B cell (primary cell): ENCODE measurements at regions of chr6 and their contacts with region 1.

Region 1: DNA sequence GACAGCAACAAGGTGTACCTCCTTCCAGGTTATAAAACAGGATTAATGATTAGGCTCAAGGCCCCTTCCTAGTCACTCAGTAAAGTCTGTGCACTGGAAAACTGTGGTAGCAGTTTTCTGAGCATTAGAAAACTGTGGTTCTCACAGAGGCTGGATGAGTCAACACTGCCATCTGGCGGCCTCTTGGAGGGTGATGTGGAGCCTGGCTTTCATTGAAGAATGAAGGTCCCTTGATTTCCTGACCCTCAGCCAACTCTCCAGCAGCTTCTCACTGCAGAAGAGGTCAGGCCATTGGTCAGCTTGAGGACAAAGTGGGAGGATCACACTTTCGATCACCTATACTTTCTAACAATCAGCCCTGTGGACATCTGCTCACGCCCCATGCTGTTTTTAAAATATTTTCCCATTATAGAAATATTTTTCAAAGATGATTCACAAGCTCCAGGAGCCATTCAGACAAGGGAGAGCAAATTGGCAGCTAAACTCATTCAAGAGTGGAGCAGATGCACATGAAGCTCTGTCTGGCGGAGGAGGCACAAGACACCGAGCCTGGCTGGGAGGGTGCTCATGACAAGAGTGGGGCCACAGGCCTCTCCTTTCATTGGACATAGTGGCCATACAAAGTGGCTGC is 23.2 kb downstream of the PSMB1 start:
- DNase-seq: peak; percentile 67
- ATAC-seq: peak; percentile 49
- H3K4me3 ChIP-seq: no peak overlapping the region
- H3K4me3 Mint-ChIP-seq: no peak overlapping the region
- H3K27ac ChIP-seq: no peak overlapping the region
- H3K27ac Mint-ChIP-seq: no peak overlapping the region
- H3K4me1 ChIP-seq: no peaks in the 10 kb centered on the region
- H3K4me1 Mint-ChIP-seq: no peaks in the 10 kb centered on the region
- H3K27me3 ChIP-seq: no peaks in the 10 kb centered on the region
- H3K27me3 Mint-ChIP-seq: no peaks in the 10 kb centered on the region
- CTCF ChIP-seq: peak; percentile 83

Region 2: DNA sequence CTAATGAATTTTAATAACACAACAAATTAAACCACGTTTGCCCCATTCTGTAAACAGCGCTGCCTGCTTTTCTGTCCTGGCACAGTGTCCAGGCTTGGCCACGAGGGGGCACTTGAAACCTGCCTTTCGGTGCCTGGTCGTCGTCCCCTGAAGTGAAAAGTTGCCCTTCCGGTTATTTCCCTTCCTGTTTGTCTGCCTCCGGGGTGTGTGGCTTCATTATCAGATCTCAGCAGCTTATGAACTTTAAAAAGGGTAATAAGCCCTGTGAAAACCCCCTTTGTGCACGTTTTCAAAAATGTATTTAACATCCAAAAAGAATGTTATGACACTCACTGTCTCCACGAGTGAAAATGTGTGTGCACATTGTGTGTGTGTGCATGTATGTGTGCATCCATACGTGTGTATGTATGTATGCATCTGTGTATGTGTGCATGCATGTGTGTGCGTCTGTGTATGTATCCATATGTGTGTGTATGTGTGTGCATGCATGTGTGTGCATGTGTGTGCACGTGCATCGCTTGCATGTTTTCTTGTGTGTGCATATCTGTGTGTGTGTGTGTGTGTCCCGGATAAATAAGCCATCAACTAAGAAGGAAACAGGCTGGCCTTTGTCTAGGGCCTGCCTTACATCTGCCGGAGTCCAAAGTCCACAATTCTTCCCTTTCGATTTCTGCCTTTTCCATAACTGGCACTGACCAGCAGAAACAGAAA is 1634.7 kb before region 1 on chr6:
- CTCF ChIA-PET with region 1: interaction called, 15 read pairs
- POLR2A ChIA-PET with region 1: no interaction called
- intact Hi-C with region 1: no loop called
- DNase-seq: peak; percentile 69
- ATAC-seq: peak; percentile 90
- H3K4me3 ChIP-seq: peak overlapping the region in 3 of 5 experiments; percentile 27 to 56 (median 34)
- H3K4me3 Mint-ChIP-seq: peak overlapping the region; percentile 35
- H3K27ac ChIP-seq: no peak overlapping the region
- H3K27ac Mint-ChIP-seq: no peak overlapping the region
- H3K4me1 ChIP-seq: peaks cover 0 to 4% of the 10 kb centered on the region in 2 donors
- H3K4me1 Mint-ChIP-seq: peaks cover 6% of the 10 kb centered on the region
- H3K27me3 ChIP-seq: peaks cover 0 to 2% (median 0%) of the 10 kb centered on the region in 4 experiments
- H3K27me3 Mint-ChIP-seq: peaks cover 8% of the 10 kb centered on the region
- CTCF ChIP-seq: peak; percentile 91

Region 3: GRCh38 chr6:168956884-168957730 is 1572.8 kb before region 1 on chr6:
- CTCF ChIA-PET with region 1: interaction called, 11 read pairs
- POLR2A ChIA-PET with region 1: no interaction called
- intact Hi-C with region 1: loop called (anchors 1 kb)
- DNase-seq: peak; percentile 56
- ATAC-seq: no peak
- H3K4me3 ChIP-seq: no peak overlapping the region
- H3K4me3 Mint-ChIP-seq: no peak overlapping the region
- H3K27ac ChIP-seq: no peak overlapping the region
- H3K27ac Mint-ChIP-seq: no peak overlapping the region
- H3K4me1 ChIP-seq: no peaks in the 10 kb centered on the region
- H3K4me1 Mint-ChIP-seq: no peaks in the 10 kb centered on the region
- H3K27me3 ChIP-seq: peaks cover 0 to 4% (median 0%) of the 10 kb centered on the region in 4 experiments
- H3K27me3 Mint-ChIP-seq: peaks cover 26% of the 10 kb centered on the region
- CTCF ChIP-seq: peak; percentile 71

Region 4: DNA sequence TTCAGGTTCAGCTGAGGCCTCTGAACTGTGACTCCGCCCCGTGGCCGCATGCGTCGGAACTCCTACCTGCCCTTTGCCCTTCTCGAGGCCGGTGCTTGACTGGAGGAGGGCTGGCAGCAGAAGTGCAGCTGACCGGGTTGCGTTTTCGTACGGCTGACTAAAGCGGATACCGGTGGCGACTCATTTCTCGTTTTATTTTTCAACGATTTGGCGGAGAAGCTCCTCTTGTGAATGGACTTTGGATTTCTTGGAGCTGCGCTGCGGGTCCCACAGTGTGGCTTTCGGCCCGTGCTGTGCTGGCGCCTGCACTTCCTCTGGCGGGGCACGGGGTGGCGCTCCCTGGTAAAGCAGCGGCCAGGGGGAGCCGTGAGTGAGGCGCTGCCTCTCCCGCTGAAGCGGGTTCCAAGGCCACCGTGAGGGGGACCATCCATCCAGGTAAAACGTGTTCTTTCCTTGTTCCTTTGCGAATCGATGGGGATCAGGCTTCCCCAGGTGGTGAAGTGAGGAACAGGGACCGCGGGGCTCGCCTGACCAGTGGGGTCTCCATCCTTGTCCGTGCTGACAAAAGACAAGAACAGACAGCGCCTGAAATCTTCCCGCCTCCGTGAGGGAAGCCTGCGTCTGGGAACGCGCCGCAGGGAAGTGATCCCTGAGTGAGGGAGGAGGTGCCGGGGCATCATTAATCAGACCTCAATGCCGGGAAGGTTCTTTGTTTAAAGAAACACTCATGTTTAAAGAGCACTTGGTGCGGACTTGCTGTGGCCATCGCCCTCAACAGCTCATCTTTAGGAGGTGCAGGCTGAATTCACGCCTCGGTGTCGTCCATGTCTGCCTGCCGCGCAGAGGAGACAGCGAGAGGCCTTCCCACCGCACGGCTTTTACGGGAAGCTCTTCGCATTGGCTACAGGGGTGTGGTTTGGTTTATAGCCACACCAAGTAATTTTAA is 739.7 kb before region 1 on chr6:
- CTCF ChIA-PET with region 1: interaction called, 44 read pairs
- POLR2A ChIA-PET with region 1: no interaction called
- intact Hi-C with region 1: loop called (anchors 1 kb)
- DNase-seq: peak; percentile 81
- ATAC-seq: peak; percentile 93
- H3K4me3 ChIP-seq: peak overlapping the region; percentile 32 to 73 (median 51)
- H3K4me3 Mint-ChIP-seq: peak overlapping the region; percentile 92
- H3K27ac ChIP-seq: no peak overlapping the region
- H3K27ac Mint-ChIP-seq: no peak overlapping the region
- H3K4me1 ChIP-seq: peaks cover 9 to 16% of the 10 kb centered on the region in 2 donors
- H3K4me1 Mint-ChIP-seq: peaks cover 14% of the 10 kb centered on the region
- H3K27me3 ChIP-seq: peaks cover 0 to 39% (median 8%) of the 10 kb centered on the region in 4 experiments
- H3K27me3 Mint-ChIP-seq: peaks cover 41% of the 10 kb centered on the region
- CTCF ChIP-seq: peak; percentile 99

Region 5: GRCh38 chr6:169831450-169832246 is 698.3 kb before region 1 on chr6:
- CTCF ChIA-PET with region 1: interaction called, 56 read pairs
- POLR2A ChIA-PET with region 1: no interaction called
- intact Hi-C with region 1: loop called (anchors 1 kb)
- DNase-seq: peak; percentile 72
- ATAC-seq: no peak
- H3K4me3 ChIP-seq: no peak overlapping the region
- H3K4me3 Mint-ChIP-seq: no peak overlapping the region
- H3K27ac ChIP-seq: no peak overlapping the region
- H3K27ac Mint-ChIP-seq: no peak overlapping the region
- H3K4me1 ChIP-seq: peaks cover 0 to 6% of the 10 kb centered on the region in 2 donors
- H3K4me1 Mint-ChIP-seq: peaks cover 1% of the 10 kb centered on the region
- H3K27me3 ChIP-seq: peaks cover 0 to 12% (median 6%) of the 10 kb centered on the region in 4 experiments
- H3K27me3 Mint-ChIP-seq: peaks cover 28% of the 10 kb centered on the region
- CTCF ChIP-seq: peak; percentile 87

Region 6: GRCh38 chr6:170542031-170542719 is 12.2 kb after region 1 on chr6:
- CTCF ChIA-PET with region 1: interaction called, 22 read pairs
- POLR2A ChIA-PET with region 1: no interaction called
- intact Hi-C with region 1: no loop called
- DNase-seq: no peak
- ATAC-seq: no peak
- H3K4me3 ChIP-seq: no peak overlapping the region
- H3K4me3 Mint-ChIP-seq: no peak overlapping the region
- H3K27ac ChIP-seq: no peak overlapping the region
- H3K27ac Mint-ChIP-seq: no peak overlapping the region
- H3K4me1 ChIP-seq: no peaks in the 10 kb centered on the region
- H3K4me1 Mint-ChIP-seq: peaks cover 18% of the 10 kb centered on the region
- H3K27me3 ChIP-seq: no peaks in the 10 kb centered on the region
- H3K27me3 Mint-ChIP-seq: no peaks in the 10 kb centered on the region
- CTCF ChIP-seq: no peak